Panc1 (cell line): ENCODE measurements at regions of chr5 and their contacts with region 1.

Region 1: DNA sequence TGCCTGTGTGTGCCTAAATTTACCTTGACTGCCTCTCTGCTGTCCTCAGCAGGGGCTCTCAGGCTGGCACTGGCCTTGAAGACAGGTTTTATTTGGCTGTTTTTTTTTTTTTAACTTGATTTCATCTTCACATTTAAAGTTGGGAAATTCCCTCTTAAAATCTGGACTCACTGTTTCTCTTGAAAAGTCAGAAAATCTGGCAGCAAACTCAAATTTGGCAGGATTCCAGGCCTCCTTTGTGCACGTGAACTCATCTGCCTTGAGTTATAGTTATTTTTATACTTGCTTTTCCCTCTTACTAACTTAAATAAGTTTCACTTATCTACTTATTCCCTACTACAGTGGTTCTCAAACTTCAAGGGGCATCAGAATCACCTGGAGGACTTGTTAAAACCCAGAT is 118.4 kb upstream of the MAP3K1 start:
- DNase-seq: no peak
- ATAC-seq: no peak
- H3K4me3 ChIP-seq: no peak overlapping the region
- H3K27ac ChIP-seq: no peak overlapping the region
- H3K4me1 ChIP-seq: no peaks in the 10 kb centered on the region
- H3K27me3 ChIP-seq: peaks cover 23% of the 10 kb centered on the region
- CTCF ChIP-seq: no peak

Region 2: DNA sequence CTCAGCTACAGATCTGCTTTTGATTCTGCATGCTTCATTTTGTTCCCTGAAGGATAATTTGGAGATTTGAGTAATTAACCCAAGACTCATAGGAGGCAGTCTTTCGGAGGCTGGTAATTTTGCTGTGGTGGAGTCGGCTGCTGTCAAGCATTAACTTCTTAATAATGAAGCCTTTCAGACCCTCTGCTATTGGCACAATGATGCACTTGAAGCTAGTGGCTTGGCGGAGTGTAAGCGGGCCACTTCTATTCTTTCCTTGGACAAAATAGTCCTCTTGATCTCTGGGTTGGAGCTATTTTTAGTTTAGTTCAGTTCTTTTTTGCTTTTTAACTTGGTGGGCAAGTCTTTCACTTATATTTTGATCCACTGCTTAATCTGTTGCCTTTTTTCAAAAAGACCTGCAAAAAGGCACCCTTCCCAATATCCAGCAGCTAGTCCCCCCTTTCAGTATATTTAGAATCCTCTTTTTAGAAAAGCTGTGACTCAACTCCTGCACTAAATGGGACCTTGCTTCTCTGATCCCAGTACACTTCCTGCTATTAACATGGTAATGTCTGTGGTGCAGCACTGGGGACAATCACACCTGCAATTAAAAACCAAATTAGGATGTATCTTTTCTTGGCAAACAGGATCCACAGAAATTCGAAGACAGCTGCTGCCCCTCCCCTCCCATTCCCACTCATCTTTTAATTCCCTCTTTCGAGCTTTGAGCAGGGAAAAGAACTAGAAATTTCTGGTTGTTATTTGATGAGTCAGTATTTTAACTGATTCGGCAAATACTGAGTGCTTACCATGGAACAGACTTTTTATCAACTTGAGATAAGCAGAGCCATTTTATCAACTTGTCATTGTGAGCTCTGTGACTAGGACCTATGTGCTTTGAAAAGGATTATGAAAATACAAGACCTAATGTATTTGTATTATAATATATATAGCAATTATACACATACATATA is 294.4 kb before region 1 on chr5:
- CTCF ChIA-PET with region 1: no interaction called
- POLR2A ChIA-PET with region 1: no interaction called
- in situ Hi-C with region 1: no loop called
- intact Hi-C with region 1: no loop called
- DNase-seq: no peak
- ATAC-seq: no peak
- H3K4me3 ChIP-seq: no peak overlapping the region
- H3K27ac ChIP-seq: no peak overlapping the region
- H3K4me1 ChIP-seq: no peaks in the 10 kb centered on the region; the same call in 1 of the 2 replicates
- H3K27me3 ChIP-seq: no peaks in the 10 kb centered on the region
- CTCF ChIP-seq: no peak

Region 3: DNA sequence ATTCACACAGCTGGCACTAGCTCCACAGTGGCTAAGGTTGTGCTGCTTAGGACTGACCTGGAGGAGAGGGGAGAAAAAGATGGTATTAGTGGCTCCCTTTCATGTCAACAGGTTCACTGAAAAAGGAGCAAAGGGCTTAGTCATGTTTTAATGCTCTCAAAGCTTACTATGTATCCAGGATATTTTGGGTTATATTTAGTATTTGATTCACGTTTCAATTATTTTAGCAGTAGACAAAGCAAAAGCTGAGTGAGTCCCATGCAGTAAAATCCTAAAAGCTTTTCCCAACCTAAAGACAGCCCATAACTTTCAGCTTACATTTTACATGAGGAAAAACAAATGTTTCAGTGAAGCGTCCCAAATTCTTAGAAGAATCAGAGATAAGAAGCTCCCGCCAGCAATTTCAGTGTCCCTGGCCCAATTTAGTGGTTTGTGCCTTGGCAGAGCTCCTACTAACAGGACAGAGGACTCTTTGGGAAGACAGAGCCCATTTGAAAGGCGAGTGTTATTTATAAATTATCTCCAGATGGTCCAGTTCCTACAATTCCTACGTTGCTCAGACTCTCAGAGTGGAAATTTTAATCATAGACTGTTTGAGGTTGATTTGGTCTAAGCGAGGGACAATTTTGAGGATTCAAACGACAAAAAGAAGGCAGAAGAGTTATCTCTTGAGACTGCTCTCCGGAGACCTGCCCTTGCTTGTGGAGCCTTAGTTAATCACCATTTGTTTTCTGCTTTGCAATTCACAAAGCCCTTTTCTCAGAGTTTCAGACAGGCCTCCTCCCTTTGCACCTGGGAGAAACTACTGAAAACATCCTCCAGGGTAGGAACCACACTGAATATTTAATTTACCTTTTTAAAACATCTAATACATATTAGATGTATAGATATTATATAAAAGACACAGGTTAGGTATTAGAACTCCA is 238.8 kb before region 1 on chr5:
- CTCF ChIA-PET with region 1: no interaction called
- POLR2A ChIA-PET with region 1: no interaction called
- in situ Hi-C with region 1: no loop called
- intact Hi-C with region 1: no loop called
- DNase-seq: no peak
- ATAC-seq: no peak
- H3K4me3 ChIP-seq: no peak overlapping the region
- H3K27ac ChIP-seq: no peak overlapping the region
- H3K4me1 ChIP-seq: peaks cover 8% of the 10 kb centered on the region; the same call in 1 of the 2 replicates
- H3K27me3 ChIP-seq: no peaks in the 10 kb centered on the region
- CTCF ChIP-seq: no peak

Region 4: GRCh38 chr5:56769875-56770604 is 73.1 kb after region 1 on chr5:
- CTCF ChIA-PET with region 1: no interaction called
- POLR2A ChIA-PET with region 1: interaction called, 13 read pairs
- in situ Hi-C with region 1: no loop called
- intact Hi-C with region 1: no loop called
- DNase-seq: no peak
- ATAC-seq: no peak
- H3K4me3 ChIP-seq: no peak overlapping the region
- H3K27ac ChIP-seq: no peak overlapping the region
- H3K4me1 ChIP-seq: no peaks in the 10 kb centered on the region
- H3K27me3 ChIP-seq: no peaks in the 10 kb centered on the region; the same call in 1 of the 2 replicates
- CTCF ChIP-seq: no peak

Region 5: DNA sequence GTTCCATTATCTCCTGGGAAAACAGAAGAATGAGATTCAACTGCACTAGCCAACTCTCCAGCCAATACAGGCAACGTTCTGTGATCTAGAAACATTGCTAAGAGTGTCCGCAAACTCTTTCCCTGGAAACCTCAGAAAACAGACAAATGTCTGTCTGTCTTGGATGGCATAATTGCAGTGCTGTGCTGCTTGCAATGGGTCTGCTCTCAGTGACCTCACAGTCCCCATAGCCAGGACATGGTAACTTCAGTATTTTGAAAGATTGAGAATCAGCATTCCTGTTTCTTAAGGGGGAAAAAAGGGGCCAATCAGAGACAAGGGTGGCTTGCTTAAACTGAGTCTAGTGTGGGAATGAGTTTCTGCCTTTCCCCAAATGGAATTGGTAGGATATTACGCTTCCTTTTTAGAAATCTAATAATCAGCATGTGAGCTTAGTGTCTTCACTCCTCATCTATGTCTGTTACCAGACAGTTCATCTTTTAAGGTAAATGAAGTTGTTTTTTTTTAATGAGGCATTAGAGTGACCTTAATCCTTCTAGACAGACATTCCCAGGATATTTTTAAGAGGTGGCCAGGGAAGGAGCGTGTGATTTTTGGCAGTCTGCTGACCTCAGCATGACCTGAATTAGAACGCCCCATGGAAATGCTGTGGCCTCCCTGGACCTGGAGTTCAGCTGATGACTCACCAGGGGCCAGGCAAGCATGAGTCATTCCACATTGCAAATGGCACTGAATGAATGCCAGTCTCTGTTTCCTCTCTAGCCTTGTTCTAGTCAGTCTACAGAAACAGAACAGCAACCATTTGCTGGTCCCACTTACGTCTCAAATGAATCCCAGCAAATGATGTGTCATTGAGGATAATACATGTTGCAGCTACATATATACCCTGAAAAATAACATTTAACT is 995.9 kb after region 1 on chr5:
- CTCF ChIA-PET with region 1: no interaction called
- POLR2A ChIA-PET with region 1: no interaction called
- in situ Hi-C with region 1: no loop called
- intact Hi-C with region 1: no loop called
- DNase-seq: peak; percentile 95
- ATAC-seq: peak; percentile 99
- H3K4me3 ChIP-seq: peak overlapping the region; percentile 32 to 50
- H3K27ac ChIP-seq: peak overlapping the region; percentile 100
- H3K4me1 ChIP-seq: peaks cover 43% of the 10 kb centered on the region
- H3K27me3 ChIP-seq: no peaks in the 10 kb centered on the region
- CTCF ChIP-seq: no peak